ENCODE measurements at regions of chr11 and their contacts with region 1.

Region 1: GRCh38 chr11:107840129-107840484 is 18.5 kb downstream of the SLC35F2 start:
- DNase-seq: no peak
- ATAC-seq: peak; percentile 4
- H3K4me3 Mint-ChIP-seq: peak overlapping the region; percentile 23
- H3K27ac Mint-ChIP-seq: peak overlapping the region; percentile 96
- H3K4me1 Mint-ChIP-seq: peaks cover 71% of the 10 kb centered on the region
- H3K27me3 Mint-ChIP-seq: no peaks in the 10 kb centered on the region

Region 2: DNA sequence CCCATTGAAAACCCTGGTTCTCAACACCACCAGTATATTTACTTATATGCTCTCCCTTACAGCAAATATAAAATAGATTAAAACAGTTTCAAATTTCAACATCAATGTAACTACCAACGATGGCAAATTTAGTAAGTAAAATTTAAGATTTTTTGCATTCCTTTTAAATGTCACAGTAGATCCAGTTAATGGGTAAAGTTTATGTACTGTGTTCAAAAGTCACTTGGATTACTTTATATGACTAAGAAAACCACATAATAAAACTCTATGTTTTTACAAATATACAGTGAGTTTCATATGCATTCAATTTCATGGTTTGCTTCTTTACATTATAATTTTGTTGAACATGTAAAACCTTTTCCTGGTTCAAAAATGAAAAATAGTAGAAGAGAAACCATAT is 1398.1 kb before region 1 on chr11:
- CTCF ChIA-PET with region 1: no interaction called
- POLR2A ChIA-PET with region 1: no interaction called
- intact Hi-C with region 1: no loop called
- DNase-seq: no peak
- ATAC-seq: no peak
- H3K4me3 Mint-ChIP-seq: no peak overlapping the region
- H3K27ac Mint-ChIP-seq: no peak overlapping the region
- H3K4me1 Mint-ChIP-seq: no peaks in the 10 kb centered on the region
- H3K27me3 Mint-ChIP-seq: no peaks in the 10 kb centered on the region

Region 3: GRCh38 chr11:107457558-107458271 is 382.4 kb before region 1 on chr11 and contains the start of gene CWF19L2:
- CTCF ChIA-PET with region 1: no interaction called
- POLR2A ChIA-PET with region 1: no interaction called
- intact Hi-C with region 1: loop called in 1 of 2 experiments (anchors 5 kb)
- DNase-seq: peak; percentile 94
- ATAC-seq: peak; percentile 99
- H3K4me3 Mint-ChIP-seq: peak within 1 kb of the TSS; percentile 84
- H3K27ac Mint-ChIP-seq: peak within 1 kb of the TSS; percentile 95
- H3K4me1 Mint-ChIP-seq: peaks cover 21% of the 10 kb centered on the region
- H3K27me3 Mint-ChIP-seq: no peaks in the 10 kb centered on the region
- total RNA-seq, gene CWF19L2: 14.1 to 14.3 TPM

Region 4: DNA sequence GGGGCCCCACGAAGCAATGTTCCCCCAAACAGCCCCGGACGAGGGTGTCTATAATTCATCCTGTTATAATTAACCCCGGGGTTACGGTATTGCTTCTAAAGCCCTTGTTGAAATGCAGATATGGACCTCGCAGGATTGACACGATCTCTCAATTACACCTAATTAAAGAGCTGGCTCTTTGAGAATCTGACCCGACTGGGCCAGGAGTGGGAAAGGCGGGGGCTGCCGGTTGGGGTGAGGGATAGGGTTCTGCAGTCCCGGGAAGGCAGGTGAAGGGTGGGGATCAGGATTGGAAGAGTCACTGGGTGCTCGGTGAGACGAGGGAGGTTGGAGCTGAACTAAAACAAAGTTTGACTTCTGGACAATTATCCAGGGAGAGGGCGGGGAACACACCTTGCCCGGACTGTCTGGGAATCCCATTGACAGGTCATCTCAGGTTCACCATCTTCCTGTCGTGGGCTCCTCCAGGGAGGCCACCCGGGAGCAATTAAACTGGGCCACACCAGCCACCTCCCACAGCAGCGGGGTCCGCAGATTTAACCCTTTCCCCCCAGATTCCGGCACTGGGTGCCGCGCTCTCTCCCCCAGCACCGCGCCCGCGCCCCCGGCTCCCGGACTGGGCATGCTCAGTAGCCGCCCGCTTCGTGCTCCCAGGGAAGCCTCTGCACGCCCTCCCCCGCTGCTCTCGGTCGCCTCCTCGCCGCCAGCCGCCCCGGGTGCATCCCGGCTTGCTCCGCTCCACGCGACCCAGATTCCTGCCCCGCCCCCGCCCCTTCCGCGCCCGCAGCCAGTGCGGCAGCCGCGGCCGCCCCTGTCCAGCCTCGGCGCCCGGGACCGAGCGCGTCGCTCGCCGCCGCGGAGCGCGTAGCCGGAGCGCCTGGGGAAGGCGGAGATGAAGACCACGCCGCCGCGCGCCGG is 249.4 kb before region 1 on chr11 and contains the start of gene ELMOD1:
- CTCF ChIA-PET with region 1: no interaction called
- POLR2A ChIA-PET with region 1: no interaction called
- intact Hi-C with region 1: loop called in 1 of 2 experiments (anchors 5 kb)
- DNase-seq: peak; percentile 69
- ATAC-seq: peak; percentile 66
- H3K4me3 Mint-ChIP-seq: peak within 1 kb of the TSS; percentile 73
- H3K27ac Mint-ChIP-seq: peak within 1 kb of the TSS; percentile 66
- H3K4me1 Mint-ChIP-seq: peaks cover 19% of the 10 kb centered on the region
- H3K27me3 Mint-ChIP-seq: peaks cover 67% of the 10 kb centered on the region
- total RNA-seq, gene ELMOD1: not detected

Region 5: GRCh38 chr11:107785401-107785800 is 54.7 kb before region 1 on chr11:
- CTCF ChIA-PET with region 1: no interaction called
- POLR2A ChIA-PET with region 1: no interaction called
- intact Hi-C with region 1: loop called in 1 of 2 experiments (anchors 2 kb)
- DNase-seq: peak; percentile 67
- ATAC-seq: peak; percentile 96
- H3K4me3 Mint-ChIP-seq: no peak overlapping the region
- H3K27ac Mint-ChIP-seq: no peak overlapping the region
- H3K4me1 Mint-ChIP-seq: peaks cover 10% of the 10 kb centered on the region
- H3K27me3 Mint-ChIP-seq: no peaks in the 10 kb centered on the region

Region 6: DNA sequence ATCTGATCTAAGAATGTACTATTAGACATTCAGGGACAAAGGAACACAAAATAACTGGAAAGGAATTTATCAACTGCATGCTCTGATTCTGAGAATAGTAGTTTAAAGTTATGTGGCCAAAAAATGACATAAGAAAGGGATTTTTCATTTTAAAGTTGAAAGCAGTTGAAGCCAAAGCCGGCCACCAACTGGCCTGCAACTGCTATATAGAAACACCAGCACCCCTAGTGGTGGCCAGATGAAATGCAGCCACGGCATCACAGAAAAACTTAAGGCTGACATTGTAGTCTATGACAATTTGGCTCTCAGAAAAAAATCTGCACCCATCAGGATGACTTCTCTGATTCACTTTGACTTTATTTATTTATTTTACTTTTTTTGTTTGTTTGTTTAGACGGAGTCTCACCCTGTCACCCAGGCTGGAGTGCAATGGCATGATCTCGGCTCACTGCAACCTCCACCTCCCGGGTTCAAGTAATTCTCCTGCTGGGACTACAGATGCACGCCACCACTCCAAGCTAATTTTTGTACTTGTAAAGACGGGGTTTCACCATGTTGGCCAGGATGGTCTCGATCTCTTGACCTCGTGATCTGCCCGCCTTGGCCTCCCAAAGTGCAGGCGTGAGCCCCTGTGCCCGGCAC is 40.8 kb before region 1 on chr11:
- CTCF ChIA-PET with region 1: interaction called, 3 read pairs
- POLR2A ChIA-PET with region 1: no interaction called
- intact Hi-C with region 1: loop called in 1 of 2 experiments (anchors 2 kb)
- DNase-seq: peak; percentile 82
- ATAC-seq: peak; percentile 81
- H3K4me3 Mint-ChIP-seq: no peak overlapping the region
- H3K27ac Mint-ChIP-seq: no peak overlapping the region
- H3K4me1 Mint-ChIP-seq: no peaks in the 10 kb centered on the region
- H3K27me3 Mint-ChIP-seq: no peaks in the 10 kb centered on the region

Region 7: GRCh38 chr11:107858217-107859070 is 18.3 kb after region 1 on chr11 and contains the start of gene SLC35F2:
- CTCF ChIA-PET with region 1: interaction called, 3 read pairs
- POLR2A ChIA-PET with region 1: interaction called, 8 read pairs
- intact Hi-C with region 1: loop called (anchors 1 kb)
- DNase-seq: peak; percentile 86
- ATAC-seq: peak; percentile 88
- H3K4me3 Mint-ChIP-seq: peak within 1 kb of the TSS; percentile 92
- H3K27ac Mint-ChIP-seq: peak within 1 kb of the TSS; percentile 94
- H3K4me1 Mint-ChIP-seq: peaks cover 31% of the 10 kb centered on the region
- H3K27me3 Mint-ChIP-seq: no peaks in the 10 kb centered on the region
- total RNA-seq, gene SLC35F2: 24.5 to 25.5 TPM

Region 8: DNA sequence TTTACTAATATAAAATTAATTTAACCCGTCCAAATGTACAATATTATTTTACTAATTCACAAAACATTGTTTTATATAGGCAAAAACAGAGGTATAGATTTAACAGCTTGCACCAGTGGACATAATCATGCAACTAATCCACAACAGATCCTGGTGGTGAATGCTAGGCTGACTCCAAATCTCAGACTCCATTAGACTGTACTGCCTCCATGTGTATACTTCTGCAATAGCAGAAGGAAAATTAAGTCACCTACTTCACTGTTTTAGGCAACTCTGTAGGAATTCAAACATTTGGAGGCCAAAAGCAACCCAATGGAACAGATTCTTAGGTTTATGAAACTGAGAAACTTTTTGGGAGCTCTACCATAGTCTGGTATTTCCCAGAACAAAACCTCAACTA is 58.2 kb after region 1 on chr11:
- CTCF ChIA-PET with region 1: no interaction called
- POLR2A ChIA-PET with region 1: no interaction called
- intact Hi-C with region 1: no loop called
- DNase-seq: no peak
- ATAC-seq: peak; percentile 81
- H3K4me3 Mint-ChIP-seq: no peak overlapping the region
- H3K27ac Mint-ChIP-seq: no peak overlapping the region
- H3K4me1 Mint-ChIP-seq: no peaks in the 10 kb centered on the region
- H3K27me3 Mint-ChIP-seq: peaks cover 5% of the 10 kb centered on the region

Region 9: DNA sequence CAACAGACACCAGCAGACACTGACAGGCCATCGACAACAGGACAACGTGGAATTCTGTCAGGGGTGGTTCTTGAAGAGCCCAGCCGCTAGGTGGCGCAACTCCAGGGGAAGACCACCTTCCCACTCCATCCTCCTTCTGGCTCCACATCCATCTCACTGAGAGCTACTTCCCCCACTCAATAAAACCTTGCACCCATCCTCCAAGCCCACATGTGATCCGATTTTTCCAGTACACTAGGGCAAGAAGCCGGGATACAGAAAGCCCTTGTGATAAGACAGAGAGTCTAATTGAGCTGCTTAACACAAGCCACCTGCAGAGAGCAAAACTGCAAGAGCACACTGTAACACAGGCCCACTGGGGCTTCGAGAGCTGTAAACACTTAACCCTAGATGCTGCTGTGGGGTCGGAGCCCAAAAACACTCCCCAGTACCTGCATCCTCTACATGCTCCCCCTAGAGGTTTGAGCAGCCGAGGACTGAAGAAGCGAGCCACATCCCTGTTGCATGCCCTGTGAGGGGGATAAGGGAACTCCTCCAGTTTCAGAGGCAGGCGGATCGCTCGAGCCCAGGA is 76.6 kb after region 1 on chr11:
- CTCF ChIA-PET with region 1: no interaction called
- POLR2A ChIA-PET with region 1: no interaction called
- intact Hi-C with region 1: no loop called
- DNase-seq: peak; percentile 68
- ATAC-seq: peak; percentile 42
- H3K4me3 Mint-ChIP-seq: no peak overlapping the region
- H3K27ac Mint-ChIP-seq: no peak overlapping the region
- H3K4me1 Mint-ChIP-seq: no peaks in the 10 kb centered on the region
- H3K27me3 Mint-ChIP-seq: peaks cover 2% of the 10 kb centered on the region

Region 10: GRCh38 chr11:108197351-108197750 is 357.2 kb after region 1 on chr11:
- CTCF ChIA-PET with region 1: no interaction called
- POLR2A ChIA-PET with region 1: no interaction called
- intact Hi-C with region 1: no loop called
- DNase-seq: no peak
- ATAC-seq: peak; percentile 7
- H3K4me3 Mint-ChIP-seq: no peak overlapping the region
- H3K27ac Mint-ChIP-seq: peak overlapping the region; percentile 67
- H3K4me1 Mint-ChIP-seq: peaks cover 63% of the 10 kb centered on the region
- H3K27me3 Mint-ChIP-seq: no peaks in the 10 kb centered on the region

Region 11: GRCh38 chr11:108733479-108734116 is 893.5 kb after region 1 on chr11:
- CTCF ChIA-PET with region 1: no interaction called
- POLR2A ChIA-PET with region 1: no interaction called
- intact Hi-C with region 1: loop called in 1 of 2 experiments (anchors 2 kb)
- DNase-seq: peak; percentile 65
- ATAC-seq: peak; percentile 99
- H3K4me3 Mint-ChIP-seq: no peak overlapping the region
- H3K27ac Mint-ChIP-seq: peak overlapping the region; percentile 81
- H3K4me1 Mint-ChIP-seq: peaks cover 56% of the 10 kb centered on the region
- H3K27me3 Mint-ChIP-seq: no peaks in the 10 kb centered on the region